ENCODE measurements at regions of chr1 and their contacts with region 1.

Region 1: DNA sequence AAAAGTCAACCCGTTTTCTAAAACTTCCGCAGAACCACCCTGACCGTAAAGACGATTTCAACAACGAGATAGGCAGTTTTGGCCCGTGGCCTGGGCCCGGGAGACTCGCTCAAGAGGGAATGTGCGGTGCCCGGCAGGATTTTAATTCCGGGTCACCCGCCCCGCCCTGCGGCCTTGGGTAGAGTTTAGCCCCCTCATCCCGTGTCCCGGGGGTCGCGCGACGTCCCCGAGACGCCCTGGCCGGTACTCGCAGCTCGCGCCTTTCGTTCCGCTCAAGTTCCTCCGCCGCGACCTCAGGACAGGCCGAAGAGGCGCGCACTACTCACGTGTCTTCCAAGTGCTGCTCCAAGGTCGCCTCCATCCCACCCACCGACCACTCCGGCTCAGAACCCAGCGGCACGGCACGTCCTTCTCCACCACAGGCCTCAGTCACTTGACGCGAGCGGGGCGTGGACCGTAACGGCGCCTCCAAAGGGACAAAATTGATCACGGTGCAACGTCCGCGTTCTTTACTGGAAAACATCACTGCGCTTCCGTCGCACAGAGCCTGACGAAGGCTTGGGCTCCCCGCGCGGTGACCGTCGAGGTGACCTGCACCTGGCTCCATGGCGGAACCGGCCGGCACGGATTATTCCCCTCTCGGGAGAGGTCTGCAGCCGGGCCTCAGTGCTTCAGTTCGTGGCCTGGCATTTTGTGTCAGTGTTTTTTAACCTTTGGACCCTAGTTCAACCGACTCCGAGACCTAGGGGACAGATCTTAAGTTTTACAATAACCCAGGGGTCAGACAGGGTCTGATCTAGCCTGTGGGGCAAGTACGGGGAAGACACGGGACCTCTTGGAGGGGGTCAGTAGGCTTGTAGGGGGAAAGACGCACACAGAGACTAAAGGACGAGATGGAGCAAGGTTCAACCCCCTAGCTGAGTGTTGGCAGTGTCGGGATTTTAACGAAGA is at the start of gene LAMTOR5:
- H3K4me3 ChIP-seq: peak within 1 kb of the TSS; percentile 98
- H3K27ac ChIP-seq: peak within 1 kb of the TSS; percentile 68
- H3K4me1 ChIP-seq: no peaks in the 10 kb centered on the region
- CTCF ChIP-seq: peak; percentile 57; the same call in 1 of the 2 replicates

Region 2: DNA sequence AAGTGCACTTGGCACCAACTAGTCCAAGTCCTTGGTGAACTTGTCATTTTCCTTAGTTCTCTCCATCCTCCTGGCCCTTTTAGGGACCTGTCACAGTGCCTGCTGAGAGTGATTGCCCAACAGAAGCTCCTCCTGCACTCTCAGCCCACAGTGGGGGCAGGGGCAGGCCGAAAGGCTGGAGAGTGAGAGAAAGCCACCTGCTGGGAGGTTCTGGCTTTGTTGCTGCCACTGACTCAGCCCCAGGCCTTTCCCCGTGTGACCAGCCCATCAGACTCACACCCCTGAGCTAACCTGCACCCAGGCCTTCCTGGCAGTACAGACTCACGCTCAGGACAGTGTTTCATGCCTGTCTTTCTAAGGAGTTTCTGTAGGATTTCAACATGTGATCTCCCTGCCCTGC is 26.3 kb after region 1 on chr1:
- CTCF ChIA-PET with region 1: interaction called, 12 read pairs
- POLR2A ChIA-PET with region 1: no interaction called
- H3K4me3 ChIP-seq: no peak overlapping the region
- H3K27ac ChIP-seq: no peak overlapping the region
- H3K4me1 ChIP-seq: no peaks in the 10 kb centered on the region
- CTCF ChIP-seq: no peak; the same call in 1 of the 2 replicates